GM10248 (cell line): ENCODE measurements at regions of chr6 and their contacts with region 1.

Region 1: DNA sequence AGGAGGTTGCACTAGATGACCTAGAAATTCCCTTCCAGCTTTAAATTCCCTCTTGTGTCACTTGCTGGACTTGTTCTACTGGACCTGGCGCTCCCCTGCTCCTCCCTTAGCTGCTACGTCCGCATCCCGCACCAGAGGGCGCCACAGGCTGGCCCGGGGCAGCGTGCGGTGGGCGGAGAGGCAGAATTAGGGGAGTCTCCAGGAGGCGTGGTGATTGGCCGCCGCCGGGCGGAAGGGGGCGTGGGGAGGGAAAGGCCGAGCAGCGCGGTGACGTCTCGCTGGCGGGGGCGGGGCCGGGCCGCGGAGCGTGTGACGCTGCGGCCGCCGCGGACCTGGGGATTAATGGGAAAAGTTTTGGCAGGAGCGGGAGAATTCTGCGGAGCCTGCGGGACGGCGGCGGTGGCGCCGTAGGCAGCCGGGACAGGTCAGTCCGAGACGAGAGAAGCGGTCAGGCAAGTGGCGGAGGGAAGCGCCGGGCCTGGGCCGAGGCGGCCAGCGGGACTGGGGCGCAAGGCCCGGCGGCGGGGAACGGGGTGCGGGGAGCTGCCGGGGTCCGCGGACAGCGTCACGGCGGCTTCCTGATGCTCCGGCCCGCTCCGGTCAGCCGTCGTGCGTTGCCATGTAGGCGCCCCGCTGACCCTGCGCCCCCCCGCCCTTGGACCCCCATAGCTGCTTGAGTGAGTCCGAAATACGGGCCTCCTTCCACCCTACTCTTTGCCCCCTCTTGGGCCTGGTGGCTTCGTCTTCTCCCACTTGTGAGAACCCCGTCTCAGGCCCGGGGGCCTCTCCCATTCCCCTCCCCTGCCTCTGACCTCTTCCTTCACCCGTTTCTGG is at the start of gene PPARD:
- DNase-seq: peak; percentile 100
- CTCF ChIP-seq: peak; percentile 98

Region 2: GRCh38 chr6:35327349-35328027 is 15.0 kb before region 1 on chr6:
- CTCF ChIA-PET with region 1: interaction called, 21 read pairs
- POLR2A ChIA-PET with region 1: no interaction called
- DNase-seq: peak; percentile 81
- CTCF ChIP-seq: peak; percentile 75

Region 3: DNA sequence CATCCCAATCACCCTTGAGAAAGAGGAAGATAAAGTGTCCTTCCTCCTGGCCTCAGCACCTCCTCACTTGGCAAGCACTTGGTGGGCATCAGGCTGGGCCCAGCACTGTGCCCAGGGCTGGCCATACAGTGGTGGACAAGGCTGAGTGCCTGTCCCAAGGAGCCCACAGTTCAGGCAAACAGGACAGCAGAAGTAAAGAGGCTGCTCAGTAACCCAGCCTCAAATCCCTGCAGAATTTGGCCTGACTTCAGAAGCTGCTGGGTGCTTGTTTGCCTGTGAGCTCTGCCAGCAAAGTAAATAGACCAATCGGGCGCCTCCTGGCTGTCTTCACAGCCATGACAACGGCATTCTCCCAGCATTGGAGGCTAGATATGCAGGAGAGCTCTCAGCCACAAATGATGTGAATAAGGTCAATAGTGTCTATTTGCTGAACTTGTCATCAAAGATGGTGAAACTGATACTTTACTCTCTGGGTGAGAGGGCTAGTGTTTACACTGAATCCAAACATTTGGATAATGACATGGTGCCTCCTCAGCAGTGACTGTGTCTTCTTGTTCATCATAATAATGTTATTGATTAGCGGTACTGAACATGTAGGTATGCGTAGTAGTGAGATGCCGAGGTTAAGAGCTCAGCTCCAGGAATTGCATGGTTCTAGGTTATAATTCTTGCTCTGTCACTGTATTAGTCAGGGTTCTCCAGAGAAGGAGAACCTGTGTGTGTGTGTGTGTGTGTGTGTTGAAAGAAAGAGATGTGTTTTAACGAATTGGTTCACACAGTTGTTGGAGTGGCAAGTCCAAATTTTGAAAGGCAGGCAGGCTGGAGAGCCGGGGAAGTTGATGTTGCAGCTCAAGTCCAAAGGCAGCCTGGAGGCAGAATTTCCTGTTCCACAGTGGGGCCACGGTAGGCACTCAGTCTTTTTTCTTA is 72.9 kb after region 1 on chr6:
- CTCF ChIA-PET with region 1: interaction called, 10 read pairs
- POLR2A ChIA-PET with region 1: no interaction called
- DNase-seq: no peak
- CTCF ChIP-seq: peak; percentile 34

Region 4: GRCh38 chr6:35452186-35453090 is 110.0 kb after region 1 on chr6 and contains the start of gene FANCE:
- CTCF ChIA-PET with region 1: interaction called, 213 read pairs
- POLR2A ChIA-PET with region 1: no interaction called
- DNase-seq: peak; percentile 98
- CTCF ChIP-seq: no peak

Region 5: GRCh38 chr6:35468181-35468979 is 125.9 kb after region 1 on chr6 and contains the start of gene RPL10A:
- CTCF ChIA-PET with region 1: interaction called, 37 read pairs
- POLR2A ChIA-PET with region 1: interaction called, 3 read pairs
- DNase-seq: peak; percentile 98
- CTCF ChIP-seq: peak; percentile 97

Region 6: DNA sequence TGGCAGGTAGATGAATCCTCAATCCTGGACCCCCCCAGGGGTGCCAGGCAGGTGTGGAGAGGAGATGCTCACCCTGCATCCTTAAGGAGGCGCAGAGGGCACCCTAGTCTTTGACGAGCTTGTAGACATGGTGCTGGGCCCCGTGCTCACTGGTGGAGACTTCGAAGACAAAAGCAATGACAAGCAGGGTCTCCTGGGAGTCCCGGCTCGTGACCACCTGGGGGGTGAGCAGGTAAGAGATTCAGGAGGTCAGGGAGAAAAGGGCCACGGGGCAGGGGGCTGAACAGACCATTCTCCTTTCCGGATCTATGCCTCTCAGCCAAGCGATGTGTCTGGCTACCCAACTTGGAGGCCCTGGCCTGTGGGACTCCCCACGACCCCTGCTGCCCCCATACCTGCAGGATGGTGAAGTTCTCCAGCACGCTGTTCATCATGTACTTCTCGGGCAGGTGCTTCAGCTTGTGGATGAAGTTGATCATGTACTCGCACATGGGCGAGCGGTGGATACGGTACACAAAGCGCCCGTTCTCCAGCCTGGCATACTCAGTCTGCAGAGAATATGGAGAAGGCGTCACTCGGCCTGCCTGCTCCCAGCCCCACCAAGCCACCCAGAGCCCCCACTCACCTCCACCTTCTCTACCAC is 132.6 kb after region 1 on chr6:
- CTCF ChIA-PET with region 1: interaction called, 8 read pairs
- POLR2A ChIA-PET with region 1: interaction called, 10 read pairs
- DNase-seq: no peak
- CTCF ChIP-seq: no peak

Region 7: GRCh38 chr6:35776364-35777215 is 434.1 kb after region 1 on chr6 and contains the start of gene CLPSL2:
- CTCF ChIA-PET with region 1: no interaction called
- POLR2A ChIA-PET with region 1: no interaction called
- DNase-seq: peak; percentile 45
- CTCF ChIP-seq: no peak

Region 8: GRCh38 chr6:35810971-35811497 is 468.6 kb after region 1 on chr6:
- CTCF ChIA-PET with region 1: no interaction called
- POLR2A ChIA-PET with region 1: no interaction called
- DNase-seq: no peak
- CTCF ChIP-seq: no peak